Ovary (tissue), 10 donors: ENCODE measurements at regions of chr11 and their contacts with region 1.

Region 1: DNA sequence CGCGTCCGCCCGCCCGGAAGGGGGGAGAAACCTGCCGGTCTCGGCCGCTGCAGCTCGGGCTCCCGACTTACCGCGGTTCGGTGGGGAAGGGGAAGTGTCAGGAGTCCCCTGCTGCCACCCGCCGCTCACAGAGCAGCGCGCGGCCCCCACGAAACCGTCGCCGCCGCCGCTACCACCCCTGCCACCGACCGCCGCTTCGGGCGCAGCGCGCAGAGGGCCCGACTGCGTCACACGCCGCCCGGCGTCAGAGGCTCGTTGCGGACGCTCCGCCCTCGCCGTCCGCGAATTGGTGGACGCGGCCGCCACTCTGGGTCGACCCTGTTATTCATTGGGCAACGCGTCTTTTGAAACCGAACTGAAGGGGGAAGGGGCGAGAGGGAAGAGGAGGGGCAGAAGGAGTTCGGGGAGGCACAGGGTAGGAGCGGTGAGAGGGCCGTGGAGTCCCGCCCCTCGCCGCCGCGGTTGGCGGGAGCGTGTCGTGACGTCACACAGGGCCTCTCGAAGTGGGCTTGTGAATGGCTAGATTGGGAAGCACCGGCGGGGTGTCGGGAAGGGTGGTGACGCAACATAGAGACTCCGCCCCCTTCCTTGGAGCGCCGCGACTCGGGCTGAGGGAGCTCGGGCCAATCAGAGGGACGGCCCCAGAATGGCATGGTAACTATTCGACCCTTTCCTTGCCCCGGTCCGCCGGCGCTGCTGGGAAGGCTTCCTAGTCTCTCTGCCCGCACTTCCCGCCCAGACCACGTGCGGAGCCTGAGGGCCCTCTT is at the start of gene NUP98:
- DNase-seq: peak; percentile 100
- H3K4me3 ChIP-seq: peak within 1 kb of the TSS; percentile 99
- H3K27ac ChIP-seq: peak within 1 kb of the TSS; percentile 91 to 93
- H3K4me1 ChIP-seq: peaks cover 5% of the 10 kb centered on the region
- H3K27me3 ChIP-seq: no peaks in the 10 kb centered on the region
- CTCF ChIP-seq: peak in 2 of 3 donors; percentile 41 to 57
- EP300 ChIP-seq: peak; percentile 77
- POLR2A ChIP-seq: peak; percentile 100
- total RNA-seq, gene NUP98: 59.4 to 126 (median 94.5) TPM

Region 2: GRCh38 chr11:3834664-3835461 is 37.4 kb after region 1 on chr11:
- intact Hi-C with region 1: loop called in 3 of 4 experiments (anchors 5 to 10 kb)
- DNase-seq: no peak
- H3K4me3 ChIP-seq: no peak overlapping the region
- H3K27ac ChIP-seq: no peak overlapping the region
- H3K4me1 ChIP-seq: peaks cover 17% of the 10 kb centered on the region
- H3K27me3 ChIP-seq: no peaks in the 10 kb centered on the region
- CTCF ChIP-seq: no peak
- EP300 ChIP-seq: no peak
- POLR2A ChIP-seq: no peak

Region 3: GRCh38 chr11:3841426-3842350 is 44.2 kb after region 1 on chr11:
- intact Hi-C with region 1: loop called in 3 of 4 experiments (anchors 5 to 10 kb)
- DNase-seq: peak; percentile 77 to 93 (median 89)
- H3K4me3 ChIP-seq: peak overlapping the region; percentile 96
- H3K27ac ChIP-seq: peak overlapping the region; percentile 92 to 96
- H3K4me1 ChIP-seq: peaks cover 11% of the 10 kb centered on the region
- H3K27me3 ChIP-seq: no peaks in the 10 kb centered on the region
- CTCF ChIP-seq: peak; percentile 76 to 89 (median 83)
- EP300 ChIP-seq: no peak
- POLR2A ChIP-seq: peak; percentile 56

Region 4: DNA sequence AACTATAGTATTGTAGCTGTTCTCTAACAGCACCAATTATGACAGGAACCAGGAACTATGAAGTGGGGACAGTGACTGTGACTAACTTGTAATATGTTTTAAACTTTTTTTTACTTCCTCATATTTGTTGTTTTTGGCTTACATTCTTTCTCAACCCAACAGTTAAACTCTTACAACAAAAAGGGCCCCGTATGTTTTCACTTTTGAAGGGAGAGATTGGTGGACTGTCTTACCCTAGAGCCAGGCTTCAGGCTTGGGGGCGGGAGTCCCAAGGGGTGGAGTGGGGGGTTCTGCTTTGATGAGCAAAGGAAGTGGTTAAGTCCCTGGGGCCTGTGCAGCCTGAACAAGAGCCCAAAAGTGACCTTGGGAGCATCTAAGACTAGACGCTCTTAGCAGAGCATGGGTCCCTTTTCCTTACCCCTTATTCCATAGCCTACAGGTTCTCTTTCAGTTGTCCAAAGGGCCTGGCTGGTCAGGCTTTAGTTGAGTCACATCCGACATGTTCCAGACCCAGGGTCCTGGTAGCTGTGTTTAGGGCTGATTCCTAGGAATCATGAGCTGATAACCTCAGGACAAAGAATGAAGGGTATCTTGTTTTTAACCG is 96.7 kb after region 1 on chr11:
- intact Hi-C with region 1: no loop called
- DNase-seq: no peak
- H3K4me3 ChIP-seq: no peak overlapping the region
- H3K27ac ChIP-seq: no peak overlapping the region
- H3K4me1 ChIP-seq: peaks cover 8% of the 10 kb centered on the region
- H3K27me3 ChIP-seq: no peaks in the 10 kb centered on the region
- CTCF ChIP-seq: no peak
- EP300 ChIP-seq: no peak
- POLR2A ChIP-seq: no peak

Region 5: DNA sequence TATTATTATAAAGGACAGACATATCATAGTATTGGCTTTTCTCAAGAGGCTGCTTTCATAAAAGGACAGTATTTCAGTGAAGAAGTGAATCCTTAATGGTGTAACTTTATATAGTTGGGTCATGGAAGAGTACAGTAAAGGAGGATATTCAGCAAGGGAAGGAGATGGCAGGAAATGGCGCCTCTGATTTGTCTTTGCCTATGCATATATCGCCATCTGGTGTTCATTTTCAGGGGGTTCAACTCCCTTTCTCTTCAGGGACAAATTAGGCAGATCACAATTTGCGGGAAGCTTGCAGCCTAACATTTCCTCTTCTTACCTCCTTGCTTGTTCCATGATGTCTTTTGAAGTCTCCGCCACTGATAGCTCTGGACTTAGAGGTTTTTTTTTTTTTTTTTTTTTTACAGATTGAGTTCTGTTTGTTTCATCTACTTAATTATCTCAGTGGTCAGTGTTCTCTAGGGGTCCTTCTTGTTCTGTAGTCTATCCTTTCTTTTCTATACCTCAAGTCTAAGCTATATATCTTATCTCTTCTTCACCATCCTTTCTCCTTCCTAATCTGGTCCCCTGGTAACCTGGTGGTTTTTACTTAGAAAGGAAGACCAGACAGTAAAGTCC is 275.3 kb after region 1 on chr11:
- intact Hi-C with region 1: no loop called
- DNase-seq: peak in 3 of 5 donors; percentile 46 to 64 (median 47)
- H3K4me3 ChIP-seq: no peak overlapping the region
- H3K27ac ChIP-seq: no peak overlapping the region
- H3K4me1 ChIP-seq: peaks cover 8% of the 10 kb centered on the region
- H3K27me3 ChIP-seq: no peaks in the 10 kb centered on the region
- CTCF ChIP-seq: peak; percentile 59 to 94 (median 89)
- EP300 ChIP-seq: no peak
- POLR2A ChIP-seq: no peak